Psoas muscle (tissue), 8 donors: ENCODE measurements at regions of chr12 and their contacts with region 1.

Region 1: GRCh38 chr12:68807576-68808387 is at the start of gene MDM2:
- DNase-seq: peak; percentile 95 to 98
- ATAC-seq: peak; percentile 88 to 98 (median 97)
- H3K4me3 ChIP-seq: peak within 1 kb of the TSS; percentile 93
- H3K27ac ChIP-seq: peak within 1 kb of the TSS; percentile 100
- H3K4me1 ChIP-seq: peaks cover 13% of the 10 kb centered on the region
- H3K27me3 ChIP-seq: no peaks in the 10 kb centered on the region
- CTCF ChIP-seq: peak; percentile 79
- total RNA-seq, gene MDM2: 51.8 to 455 (median 77.6) TPM

Region 2: GRCh38 chr12:68745904-68746571 is 61.7 kb before region 1 on chr12 and contains the start of gene SLC35E3:
- intact Hi-C with region 1: loop called (anchors 5 kb)
- DNase-seq: peak; percentile 94 to 97
- ATAC-seq: peak; percentile 99 to 100 (median 100)
- H3K4me3 ChIP-seq: peak within 1 kb of the TSS; percentile 85
- H3K27ac ChIP-seq: peak within 1 kb of the TSS; percentile 76
- H3K4me1 ChIP-seq: peaks cover 17% of the 10 kb centered on the region
- H3K27me3 ChIP-seq: no peaks in the 10 kb centered on the region
- CTCF ChIP-seq: no peak
- total RNA-seq, gene SLC35E3: 4.2 to 7.5 (median 6.0) TPM